Activated T-helper 2 cell treated with anti-CD3 and anti-CD28 coated beads, Interferon-gamma antibody, Interleukin-2, Interleukin-4, amounts not matched to agents 10 μg/mL and 5 μg/mL and 100 μg/mL, durations not matched to agents 14 hours and 24 hours and 36 hours (primary cell): ENCODE measurements at regions of chr3 and their contacts with region 1.

Region 1: GRCh38 chr3:194134757-194135528 is 1.0 kb upstream of the HES1 start:
- DNase-seq: peak; percentile 82
- H3K4me3 Mint-ChIP-seq: peak overlapping the region; percentile 82
- H3K27ac Mint-ChIP-seq: peak overlapping the region; percentile 83
- H3K4me1 Mint-ChIP-seq: peaks cover 50% of the 10 kb centered on the region
- H3K27me3 Mint-ChIP-seq: peaks cover 75% of the 10 kb centered on the region

Region 2: GRCh38 chr3:193665370-193665989 is 469.5 kb before region 1 on chr3:
- intact Hi-C with region 1: loop called (anchors 10 kb)
- DNase-seq: no peak
- H3K4me3 Mint-ChIP-seq: no peak overlapping the region
- H3K27ac Mint-ChIP-seq: no peak overlapping the region
- H3K4me1 Mint-ChIP-seq: no peaks in the 10 kb centered on the region
- H3K27me3 Mint-ChIP-seq: no peaks in the 10 kb centered on the region

Region 3: DNA sequence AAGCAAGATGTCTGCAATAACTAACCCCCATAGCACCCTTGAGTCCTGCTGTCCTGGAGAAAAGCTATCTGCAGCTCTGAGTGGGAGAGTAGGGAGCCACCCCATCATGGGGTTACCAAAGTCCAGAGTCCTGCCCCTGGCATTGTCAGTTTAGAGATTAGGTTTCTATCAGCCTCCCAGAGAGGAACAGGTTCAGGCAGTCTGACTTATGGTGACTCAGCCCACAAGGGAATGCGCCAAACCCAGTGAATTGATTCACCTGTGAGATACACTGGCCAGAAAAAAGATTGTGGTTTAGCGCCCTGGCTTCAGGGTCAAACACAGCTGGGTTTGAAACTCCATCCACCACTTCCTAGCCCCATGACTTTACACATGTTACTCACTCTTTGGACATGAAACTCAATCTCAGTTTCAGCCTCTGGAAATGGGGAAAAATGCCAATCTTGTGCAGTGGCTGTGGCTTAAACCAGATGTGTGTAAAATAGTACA is 262.6 kb before region 1 on chr3:
- intact Hi-C with region 1: loop called (anchors 2 kb)
- DNase-seq: no peak
- H3K4me3 Mint-ChIP-seq: no peak overlapping the region
- H3K27ac Mint-ChIP-seq: no peak overlapping the region
- H3K4me1 Mint-ChIP-seq: peaks cover 13% of the 10 kb centered on the region
- H3K27me3 Mint-ChIP-seq: peaks cover 50% of the 10 kb centered on the region

Region 4: DNA sequence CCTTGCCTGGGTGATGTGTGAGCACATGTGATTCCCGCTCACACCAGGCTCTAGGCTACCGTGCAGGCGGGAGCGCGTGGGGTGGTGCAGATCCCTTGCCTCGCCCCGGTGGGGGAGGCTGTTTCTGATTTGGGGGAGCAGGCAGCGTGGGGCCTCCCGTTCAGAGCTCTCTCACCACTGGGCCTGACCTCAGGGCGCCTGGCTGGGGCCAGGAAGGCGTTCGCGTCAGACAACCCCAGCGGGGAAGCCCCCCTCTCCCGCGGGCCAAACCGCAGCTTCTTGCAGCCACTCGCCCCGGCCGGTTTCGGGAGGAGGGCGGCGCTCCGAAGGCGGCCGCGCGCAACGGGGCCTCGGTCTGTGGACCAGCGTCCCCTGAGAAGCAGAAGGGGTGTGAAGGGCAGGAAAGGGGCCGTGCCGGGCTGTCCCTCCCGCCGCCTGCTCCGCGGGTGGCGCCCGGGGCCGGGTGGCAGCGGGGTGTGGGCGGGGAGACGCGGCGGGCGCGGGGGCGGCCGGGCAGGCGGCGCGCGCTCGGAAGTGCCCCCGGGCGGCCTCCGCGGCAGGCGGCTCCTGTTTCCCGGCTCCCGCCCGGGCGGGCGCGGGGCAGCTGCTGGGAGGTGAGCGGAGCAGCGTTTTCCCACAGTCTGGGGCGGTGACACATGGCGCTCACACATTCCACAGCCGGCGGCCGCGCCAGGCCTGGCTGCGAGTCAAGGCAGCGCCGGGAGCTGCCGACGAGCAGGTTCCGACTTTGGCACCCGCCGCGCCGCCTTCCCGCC is 64.1 kb before region 1 on chr3:
- intact Hi-C with region 1: loop called (anchors 2 kb)
- DNase-seq: peak; percentile 40
- H3K4me3 Mint-ChIP-seq: peak overlapping the region; percentile 50
- H3K27ac Mint-ChIP-seq: no peak overlapping the region
- H3K4me1 Mint-ChIP-seq: peaks cover 21% of the 10 kb centered on the region
- H3K27me3 Mint-ChIP-seq: peaks cover 72% of the 10 kb centered on the region

Region 5: DNA sequence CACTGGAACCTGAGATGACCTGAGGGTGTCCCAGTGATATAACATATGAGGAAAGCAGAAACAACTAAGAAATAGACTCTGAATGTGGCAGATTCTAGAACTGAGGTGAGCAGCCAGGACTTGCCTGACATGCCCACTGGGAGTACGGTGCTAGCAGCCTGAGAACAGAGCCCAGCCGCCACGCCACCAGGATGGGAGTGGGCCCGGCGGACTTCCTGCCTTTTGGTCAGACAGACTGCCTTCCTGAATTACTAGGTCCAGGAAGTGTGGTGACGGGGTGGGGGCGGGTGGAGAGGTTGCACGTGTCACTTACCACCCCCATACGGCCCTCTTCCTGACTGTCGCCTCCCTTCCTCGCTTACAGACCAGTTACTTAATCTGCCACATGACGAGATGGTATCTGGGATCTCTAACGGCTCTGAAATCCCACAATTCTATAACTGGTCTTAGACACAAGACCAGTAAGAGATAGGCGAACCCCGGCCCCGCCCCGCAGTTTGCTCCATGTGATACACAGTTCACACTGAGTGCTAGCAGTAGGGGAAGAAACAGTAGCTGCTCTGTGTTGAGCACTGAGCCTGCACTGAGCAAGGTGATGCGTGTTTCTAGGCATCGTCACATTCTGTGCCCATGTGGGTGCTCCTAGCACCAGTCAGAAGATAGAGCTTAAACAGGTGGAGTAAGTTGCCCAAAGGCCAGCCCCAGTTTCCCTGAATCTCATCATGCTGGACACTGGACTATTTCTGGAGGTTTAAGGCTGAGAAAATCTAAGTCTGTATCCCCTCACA is 120.5 kb after region 1 on chr3:
- intact Hi-C with region 1: loop called (anchors 5 kb)
- DNase-seq: peak; percentile 69
- H3K4me3 Mint-ChIP-seq: peak overlapping the region; percentile 43
- H3K27ac Mint-ChIP-seq: peak overlapping the region; percentile 61
- H3K4me1 Mint-ChIP-seq: peaks cover 38% of the 10 kb centered on the region
- H3K27me3 Mint-ChIP-seq: peaks cover 2% of the 10 kb centered on the region

Region 6: GRCh38 chr3:194395778-194396547 is 261.0 kb after region 1 on chr3:
- intact Hi-C with region 1: loop called (anchors 5 kb)
- DNase-seq: peak; percentile 48
- H3K4me3 Mint-ChIP-seq: peak overlapping the region; percentile 71
- H3K27ac Mint-ChIP-seq: peak overlapping the region; percentile 55
- H3K4me1 Mint-ChIP-seq: peaks cover 34% of the 10 kb centered on the region
- H3K27me3 Mint-ChIP-seq: peaks cover 37% of the 10 kb centered on the region